A549 (cell line): ENCODE measurements at regions of chr17 and their contacts with region 1.

Region 1: DNA sequence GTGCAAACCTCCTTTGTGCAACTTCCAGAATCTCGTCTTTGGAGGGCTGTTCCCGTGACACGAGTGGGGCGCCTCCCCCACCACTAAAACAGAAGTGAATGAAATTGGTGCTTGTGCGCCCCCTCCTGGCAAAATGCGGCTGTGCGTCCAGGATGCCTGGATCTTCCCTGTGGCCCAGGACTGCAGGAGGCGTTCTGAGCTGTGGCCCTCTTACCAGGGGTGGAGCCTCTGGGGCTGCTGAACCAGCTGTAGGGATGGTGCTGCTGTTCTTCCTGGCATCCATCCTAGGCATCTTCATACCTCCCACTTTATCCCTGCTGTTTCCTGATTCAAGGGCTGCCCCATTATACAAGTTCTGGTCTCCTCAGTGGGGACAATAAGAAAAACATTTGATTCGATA is 18.5 kb upstream of the NAGLU start:
- DNase-seq: peak; percentile 92 to 100
- ATAC-seq: peak; percentile 73 to 85
- H3K4me3 ChIP-seq: no peak overlapping the region
- H3K27ac ChIP-seq: peak overlapping the region; percentile 95 to 98
- H3K4me1 ChIP-seq: peaks cover 59% of the 10 kb centered on the region
- CTCF ChIP-seq: peak; percentile 99
- EP300 ChIP-seq: no peak
- POLR2A ChIP-seq: no peak
- RAD21 ChIP-seq: peak; percentile 96

Region 2: DNA sequence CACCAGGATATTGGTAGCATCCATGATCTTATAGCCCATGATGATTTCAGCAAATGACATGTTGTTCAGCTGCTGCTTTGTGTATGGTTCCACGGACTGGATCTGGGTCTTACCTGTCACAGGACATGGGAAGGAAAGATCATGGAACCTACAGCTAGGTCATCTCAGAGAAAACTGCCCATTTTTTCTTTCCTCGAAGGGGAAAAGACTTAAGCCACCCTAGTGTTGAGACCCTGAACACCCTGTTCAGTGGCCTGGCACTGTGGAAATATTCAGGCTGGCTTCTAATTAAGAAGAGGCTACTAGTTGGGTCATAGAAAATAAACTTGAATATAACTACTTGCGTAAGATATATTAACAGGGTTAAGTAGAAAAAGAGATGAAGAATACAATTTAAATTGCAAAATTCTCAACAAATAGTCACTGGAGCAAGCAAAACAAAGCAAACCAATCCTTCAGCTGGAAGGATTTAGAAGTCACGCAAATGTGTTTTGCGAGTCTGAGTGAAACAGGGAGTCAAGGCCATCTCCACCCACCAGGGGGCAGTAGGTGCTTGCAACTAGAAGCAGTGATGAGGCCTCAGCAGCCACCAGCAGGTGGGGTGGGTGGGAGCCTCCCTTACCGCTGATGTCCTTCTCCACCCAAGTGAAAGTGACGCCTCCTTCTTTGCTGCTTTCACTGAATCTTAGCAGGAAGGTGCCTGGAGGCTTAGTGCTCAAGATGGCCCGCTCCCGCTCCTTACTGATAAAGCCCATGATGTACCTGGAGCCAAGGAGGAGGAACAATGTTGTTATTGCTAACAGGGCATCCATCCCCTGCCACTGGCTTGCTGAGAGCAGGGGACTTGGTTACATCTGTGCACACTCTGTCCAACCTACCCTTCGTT is 194.9 kb before region 1 on chr17:
- CTCF ChIA-PET with region 1: interaction called, 364 read pairs
- POLR2A ChIA-PET with region 1: interaction called, 6 read pairs
- DNase-seq: peak; percentile 97 to 98
- ATAC-seq: peak; percentile 83 to 87
- H3K4me3 ChIP-seq: no peak overlapping the region
- H3K27ac ChIP-seq: peak overlapping the region; percentile 59 to 89
- H3K4me1 ChIP-seq: peaks cover 51% of the 10 kb centered on the region
- CTCF ChIP-seq: peak; percentile 100
- EP300 ChIP-seq: no peak
- POLR2A ChIP-seq: no peak
- RAD21 ChIP-seq: peak; percentile 100

Region 3: GRCh38 chr17:42405963-42406495 is 111.5 kb before region 1 on chr17:
- CTCF ChIA-PET with region 1: interaction called, 115 read pairs
- POLR2A ChIA-PET with region 1: interaction called, 3 read pairs
- DNase-seq: peak; percentile 82 to 90
- ATAC-seq: peak; percentile 56 to 67
- H3K4me3 ChIP-seq: no peak overlapping the region
- H3K27ac ChIP-seq: peak overlapping the region in 1 of 2 experiments; percentile 84; a peak in 3 of 6 replicates
- H3K4me1 ChIP-seq: peaks cover 73% of the 10 kb centered on the region
- CTCF ChIP-seq: peak; percentile 97
- EP300 ChIP-seq: no peak
- POLR2A ChIP-seq: no peak
- RAD21 ChIP-seq: peak; percentile 98 to 99

Region 4: DNA sequence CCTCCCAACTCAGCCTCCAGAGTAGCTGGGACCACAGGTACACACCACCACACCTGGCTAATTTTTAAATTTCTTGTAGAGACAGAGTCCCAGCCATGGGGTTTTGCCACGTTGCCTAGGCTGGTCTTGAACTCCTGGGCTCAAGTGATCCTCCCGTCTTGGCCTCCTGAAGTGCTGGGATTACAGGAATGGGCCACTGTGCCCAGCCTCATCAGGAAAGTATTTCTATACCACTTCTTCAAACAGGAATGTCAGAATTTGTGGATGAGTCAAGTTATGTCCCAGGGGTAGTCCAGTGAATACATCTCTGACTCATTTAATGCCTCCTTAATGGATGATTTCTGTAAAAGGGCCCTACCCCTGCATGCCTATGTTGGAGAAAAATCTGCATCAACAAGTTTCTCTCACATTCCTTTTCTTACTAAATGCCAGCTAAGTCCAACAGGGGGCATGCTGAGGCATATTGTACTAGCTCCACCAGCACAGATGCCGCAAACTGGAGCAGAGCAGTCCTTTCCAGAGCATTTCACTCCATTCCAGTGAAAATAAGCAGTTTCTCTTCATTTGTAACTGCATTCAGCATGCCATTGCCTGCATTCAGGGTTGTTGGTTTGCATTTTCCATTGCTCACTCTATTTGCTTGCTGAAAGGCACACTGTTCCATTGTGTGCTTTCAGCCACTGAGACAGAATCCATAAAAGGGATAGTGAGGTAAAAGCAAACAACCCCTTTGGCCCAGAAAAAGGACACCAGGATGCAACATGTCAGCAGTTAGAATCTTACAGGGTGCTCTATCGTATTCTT is 89.2 kb before region 1 on chr17:
- CTCF ChIA-PET with region 1: interaction called, 213 read pairs
- POLR2A ChIA-PET with region 1: interaction called, 66 read pairs
- DNase-seq: peak; percentile 97 to 98
- ATAC-seq: peak; percentile 91 to 96
- H3K4me3 ChIP-seq: no peak overlapping the region
- H3K27ac ChIP-seq: peak overlapping the region; percentile 66 to 83
- H3K4me1 ChIP-seq: peaks cover 55% of the 10 kb centered on the region
- CTCF ChIP-seq: peak; percentile 84
- EP300 ChIP-seq: no peak
- POLR2A ChIP-seq: no peak
- RAD21 ChIP-seq: peak; percentile 84 to 86

Region 5: GRCh38 chr17:42467859-42468258 is 49.7 kb before region 1 on chr17:
- CTCF ChIA-PET with region 1: interaction called, 25 read pairs
- POLR2A ChIA-PET with region 1: no interaction called
- DNase-seq: no peak
- ATAC-seq: no peak
- H3K4me3 ChIP-seq: no peak overlapping the region
- H3K27ac ChIP-seq: no peak overlapping the region
- H3K4me1 ChIP-seq: peaks cover 33% of the 10 kb centered on the region
- CTCF ChIP-seq: no peak
- EP300 ChIP-seq: no peak
- POLR2A ChIP-seq: no peak
- RAD21 ChIP-seq: no peak

Region 6: DNA sequence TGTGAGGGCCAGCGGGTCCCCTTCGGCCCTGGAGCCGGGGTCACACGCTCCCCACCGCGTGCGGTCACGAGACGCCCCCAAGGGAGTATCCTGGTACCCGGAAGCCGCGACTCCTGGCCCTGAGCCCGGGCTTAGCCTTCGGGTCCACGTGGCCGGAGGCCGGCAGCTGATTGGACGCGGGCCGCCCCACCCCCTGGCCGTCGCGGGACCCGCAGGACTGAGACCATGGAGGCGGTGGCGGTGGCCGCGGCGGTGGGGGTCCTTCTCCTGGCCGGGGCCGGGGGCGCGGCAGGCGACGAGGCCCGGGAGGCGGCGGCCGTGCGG is 18.5 kb after region 1 on chr17 and contains the start of gene NAGLU:
- CTCF ChIA-PET with region 1: interaction called, 231 read pairs
- POLR2A ChIA-PET with region 1: interaction called, 22 read pairs
- DNase-seq: peak; percentile 91 to 100
- ATAC-seq: peak; percentile 88 to 89
- H3K4me3 ChIP-seq: peak within 1 kb of the TSS; percentile 82
- H3K27ac ChIP-seq: peak within 1 kb of the TSS; percentile 93 to 97
- H3K4me1 ChIP-seq: peaks cover 31% of the 10 kb centered on the region
- CTCF ChIP-seq: no peak
- EP300 ChIP-seq: no peak
- POLR2A ChIP-seq: peak; percentile 54
- RAD21 ChIP-seq: no peak
- polyA plus RNA-seq, gene NAGLU: 17.8 and 18.0 TPM in 2 replicates

Region 7: DNA sequence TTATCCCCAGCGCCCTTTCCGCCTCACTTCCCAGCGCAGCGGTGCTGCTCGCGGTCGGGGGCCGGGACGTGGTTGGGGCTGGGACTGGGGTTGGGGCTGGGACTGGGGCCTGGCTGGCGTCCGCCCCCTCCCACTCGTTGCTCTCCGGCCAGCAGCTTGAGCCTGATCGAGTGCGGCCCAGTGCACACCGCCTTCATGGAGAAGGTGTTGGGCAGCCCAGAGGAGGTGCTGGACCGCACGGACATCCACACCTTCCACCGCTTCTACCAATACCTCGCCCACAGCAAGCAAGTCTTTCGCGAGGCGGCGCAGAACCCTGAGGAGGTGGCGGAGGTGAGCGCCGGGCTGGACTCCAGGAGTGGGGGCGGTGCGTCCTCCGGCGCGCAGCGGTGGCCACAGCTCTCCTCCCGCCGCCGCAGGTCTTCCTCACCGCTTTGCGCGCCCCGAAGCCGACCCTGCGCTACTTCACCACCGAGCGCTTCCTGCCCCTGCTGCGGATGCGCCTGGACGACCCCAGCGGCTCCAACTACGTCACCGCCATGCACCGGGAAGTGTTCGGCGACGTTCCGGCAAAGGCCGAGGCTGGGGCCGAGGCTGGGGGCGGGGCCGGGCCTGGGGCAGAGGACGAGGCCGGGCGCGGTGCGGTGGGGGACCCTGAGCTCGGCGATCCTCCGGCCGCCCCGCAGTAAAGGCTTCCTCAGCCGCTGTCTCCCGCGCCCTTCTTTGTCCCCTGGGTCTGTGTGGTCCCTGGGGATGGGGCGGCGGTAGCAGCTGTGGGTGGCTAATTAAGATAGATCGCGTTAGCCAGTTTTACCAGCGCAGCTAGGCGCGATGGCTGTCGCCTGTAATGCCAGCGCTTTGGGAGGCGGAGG is 37.0 kb after region 1 on chr17:
- CTCF ChIA-PET with region 1: no interaction called
- POLR2A ChIA-PET with region 1: no interaction called
- DNase-seq: peak; percentile 82 to 88
- ATAC-seq: peak; percentile 81 to 89
- H3K4me3 ChIP-seq: peak overlapping the region; percentile 87
- H3K27ac ChIP-seq: peak overlapping the region; percentile 94
- H3K4me1 ChIP-seq: peaks cover 17% of the 10 kb centered on the region
- CTCF ChIP-seq: no peak
- EP300 ChIP-seq: no peak
- POLR2A ChIP-seq: peak; percentile 88
- RAD21 ChIP-seq: no peak

Region 8: DNA sequence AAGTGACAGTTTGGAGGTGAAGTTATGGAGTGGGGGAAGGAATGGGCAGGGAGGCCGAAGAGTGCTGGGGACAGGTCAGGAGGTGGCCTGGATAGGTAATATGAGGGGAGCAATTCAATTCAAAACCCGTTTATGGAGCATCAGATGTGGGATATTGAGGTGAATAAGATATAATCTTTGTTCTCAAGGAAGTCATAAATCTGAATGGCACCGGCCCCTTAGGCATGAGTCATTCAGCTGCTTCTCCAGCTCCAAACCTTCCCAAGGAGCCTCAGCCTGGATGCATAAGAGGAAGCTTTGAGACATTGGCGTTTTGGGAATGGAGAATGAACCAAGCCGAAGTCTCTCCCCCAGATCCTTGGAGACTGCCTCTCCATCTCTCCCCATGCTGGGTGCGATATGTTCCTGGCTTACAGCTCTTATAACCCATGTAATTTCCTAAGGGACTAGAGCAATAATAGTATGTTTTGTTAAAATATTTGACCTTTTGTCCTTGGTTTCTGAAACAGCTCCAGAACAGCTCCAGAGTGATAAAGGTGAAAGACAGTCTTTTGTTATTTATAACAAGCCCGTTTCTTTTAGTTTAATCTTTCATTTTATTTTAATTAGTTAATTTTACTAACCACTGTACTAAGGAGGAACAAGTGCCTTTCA is 143.3 kb after region 1 on chr17:
- CTCF ChIA-PET with region 1: no interaction called
- POLR2A ChIA-PET with region 1: no interaction called
- DNase-seq: peak in 1 of 2 experiments; percentile 68
- ATAC-seq: peak; percentile 10 to 34; a peak in 3 of 6 replicates
- H3K4me3 ChIP-seq: no peak overlapping the region
- H3K27ac ChIP-seq: peak overlapping the region; percentile 23 to 39; a peak in 4 of 6 replicates
- H3K4me1 ChIP-seq: peaks cover 18% of the 10 kb centered on the region
- CTCF ChIP-seq: no peak
- EP300 ChIP-seq: no peak
- POLR2A ChIP-seq: no peak
- RAD21 ChIP-seq: no peak